Activated CD4-positive, alpha-beta memory T cell treated with anti-CD3 and anti-CD28 coated beads, Interleukin-2, amount 10 ng/mL, durations not matched to agents 7 days and 5 days (primary cell): ENCODE measurements at regions of chr1 and their contacts with region 1.

Region 1: DNA sequence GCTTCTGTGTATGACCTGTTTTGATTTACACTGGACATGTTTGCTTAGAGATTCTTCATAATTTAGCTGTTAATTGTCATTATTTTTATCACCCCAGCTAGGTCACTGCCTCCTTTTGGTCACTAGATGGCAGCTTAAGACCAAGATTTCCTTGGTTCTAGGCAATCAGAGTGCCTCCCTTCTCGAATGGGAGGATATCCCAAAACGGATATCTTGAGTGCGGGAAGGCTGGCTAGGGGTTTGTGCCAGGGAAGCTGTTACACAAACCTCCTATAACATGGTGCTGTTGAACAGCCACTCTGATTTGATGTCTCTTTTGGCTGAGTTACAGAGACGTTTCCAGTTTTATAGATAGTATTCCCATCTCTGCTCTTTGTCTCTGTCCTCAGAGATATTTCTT is 283.5 kb downstream of the S1PR1 start:
- DNase-seq: no peak
- H3K4me3 Mint-ChIP-seq: no peak overlapping the region
- H3K27ac Mint-ChIP-seq: no peak overlapping the region
- H3K4me1 Mint-ChIP-seq: peaks cover 6% of the 10 kb centered on the region
- H3K27me3 Mint-ChIP-seq: peaks cover 20% of the 10 kb centered on the region

Region 2: GRCh38 chr1:101506541-101507164 is 13.6 kb before region 1 on chr1:
- CTCF ChIA-PET with region 1: interaction called, 30 read pairs
- POLR2A ChIA-PET with region 1: no interaction called
- DNase-seq: peak; percentile 29
- H3K4me3 Mint-ChIP-seq: no peak overlapping the region
- H3K27ac Mint-ChIP-seq: no peak overlapping the region
- H3K4me1 Mint-ChIP-seq: no peaks in the 10 kb centered on the region
- H3K27me3 Mint-ChIP-seq: peaks cover 8% of the 10 kb centered on the region

Region 3: DNA sequence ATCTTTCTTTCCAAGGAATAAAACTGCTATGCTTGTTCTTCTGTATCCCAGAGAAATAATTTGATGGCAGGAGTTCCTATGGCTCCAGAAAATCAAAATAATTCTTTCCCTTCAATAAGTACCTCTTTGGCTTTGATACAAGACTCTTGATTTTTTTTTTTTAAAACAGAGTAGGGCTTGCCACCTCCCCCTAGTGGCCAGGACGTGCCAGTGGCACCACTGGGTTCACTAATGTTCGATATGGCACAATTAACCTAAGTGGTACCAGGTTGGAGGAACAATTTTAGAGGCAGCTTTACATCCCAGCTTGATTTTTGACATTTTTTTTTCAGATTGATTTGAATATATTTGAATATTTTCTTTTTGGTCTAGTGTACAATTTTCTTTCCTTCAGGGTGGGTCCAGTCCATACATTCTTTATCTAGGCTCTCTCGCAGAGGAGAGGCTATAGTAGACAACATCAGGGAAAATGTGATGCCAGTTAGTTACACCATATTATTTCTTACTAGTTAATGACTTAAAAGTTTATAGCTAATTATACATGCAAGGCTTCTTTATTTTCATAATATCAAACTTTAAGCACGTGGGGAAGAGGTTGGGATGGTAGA is 47.4 kb after region 1 on chr1:
- CTCF ChIA-PET with region 1: interaction called, 15 read pairs
- POLR2A ChIA-PET with region 1: no interaction called
- DNase-seq: peak; percentile 52
- H3K4me3 Mint-ChIP-seq: no peak overlapping the region
- H3K27ac Mint-ChIP-seq: no peak overlapping the region
- H3K4me1 Mint-ChIP-seq: no peaks in the 10 kb centered on the region
- H3K27me3 Mint-ChIP-seq: peaks cover 25% of the 10 kb centered on the region